SK-N-SH (cell line): ENCODE measurements at regions of chr2 and their contacts with region 1.

Region 1: GRCh38 chr2:175251425-175252041 is 70.0 kb upstream of the ATP5MC3 start:
- DNase-seq: peak; percentile 40
- H3K4me3 ChIP-seq: no peak overlapping the region; a peak in 1 of 4 replicates
- H3K27ac ChIP-seq: no peak overlapping the region
- H3K4me1 ChIP-seq: no peaks in the 10 kb centered on the region
- H3K27me3 ChIP-seq: no peaks in the 10 kb centered on the region
- CTCF ChIP-seq: peak; percentile 86
- EP300 ChIP-seq: no peak
- RAD21 ChIP-seq: peak; percentile 69

Region 2: DNA sequence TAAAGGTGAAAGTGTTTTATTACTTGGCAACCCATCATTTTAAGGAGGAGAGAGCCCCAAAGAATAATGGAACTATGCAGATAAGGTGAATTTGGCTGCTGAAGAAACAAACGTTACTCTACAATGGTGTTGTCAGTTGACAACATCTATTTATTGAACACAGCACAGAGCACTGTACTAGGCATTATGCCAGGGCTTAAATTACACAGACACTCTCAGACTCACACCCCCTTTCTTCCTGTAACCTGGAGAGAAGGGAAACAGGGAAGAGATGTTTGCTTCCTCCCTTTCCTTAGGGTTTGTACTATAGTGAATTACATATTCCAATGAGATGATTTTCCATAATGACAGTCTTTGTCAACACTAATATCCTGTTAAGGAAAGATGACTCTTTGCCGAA is 24.0 kb after region 1 on chr2:
- CTCF ChIA-PET with region 1: interaction called, 168 read pairs
- POLR2A ChIA-PET with region 1: no interaction called
- DNase-seq: peak; percentile 37
- H3K4me3 ChIP-seq: no peak overlapping the region
- H3K27ac ChIP-seq: no peak overlapping the region
- H3K4me1 ChIP-seq: peaks cover 0 to 7% of the 10 kb centered on the region in 2 experiments; a peak in 1 of 4 replicates
- H3K27me3 ChIP-seq: no peaks in the 10 kb centered on the region; the same call in 1 of the 2 replicates
- CTCF ChIP-seq: no peak
- EP300 ChIP-seq: peak in 1 of 2 experiments; percentile 18; a peak in 1 of 4 replicates
- RAD21 ChIP-seq: no peak

Region 3: GRCh38 chr2:175304541-175304940 is 53.0 kb after region 1 on chr2:
- CTCF ChIA-PET with region 1: interaction called, 13 read pairs
- POLR2A ChIA-PET with region 1: no interaction called
- DNase-seq: no peak
- H3K4me3 ChIP-seq: no peak overlapping the region
- H3K27ac ChIP-seq: no peak overlapping the region
- H3K4me1 ChIP-seq: no peaks in the 10 kb centered on the region
- H3K27me3 ChIP-seq: no peaks in the 10 kb centered on the region; the same call in 1 of the 2 replicates
- CTCF ChIP-seq: no peak
- EP300 ChIP-seq: no peak
- RAD21 ChIP-seq: no peak

Region 4: DNA sequence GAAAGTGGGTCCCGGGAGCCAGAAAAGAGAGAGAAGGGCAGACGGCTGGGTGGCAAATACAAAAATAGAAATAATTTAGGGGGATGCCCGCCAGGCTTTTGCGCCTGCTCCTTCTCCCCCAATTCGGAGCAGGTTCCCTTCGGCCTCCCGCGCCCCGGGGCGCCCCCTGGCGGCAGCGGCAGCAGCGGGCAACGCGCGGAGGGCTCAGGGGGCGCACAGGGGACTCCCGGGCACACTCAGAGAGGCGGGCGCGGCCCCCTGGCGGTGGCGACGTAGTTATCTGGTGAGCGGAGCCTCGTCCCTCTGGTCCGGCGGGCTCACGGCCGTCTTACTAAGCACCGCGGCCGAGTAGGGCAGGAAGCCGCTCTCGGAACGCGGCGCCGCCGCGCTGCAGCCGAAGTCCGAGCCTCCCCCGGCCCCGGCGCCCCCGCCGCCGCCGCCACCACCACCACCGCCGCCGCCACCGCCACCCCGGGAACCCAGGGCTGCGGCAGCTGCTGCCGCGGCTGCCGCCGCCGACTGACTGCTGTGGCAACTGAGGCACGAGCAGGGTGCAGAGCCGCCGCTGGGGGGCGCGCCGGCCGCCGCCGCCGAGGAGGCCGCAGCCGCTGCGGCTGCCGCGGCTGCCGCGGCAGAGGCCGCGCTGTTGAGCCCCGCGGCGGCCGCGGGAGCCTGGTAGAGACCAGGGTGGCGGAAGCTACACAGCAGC is 828.5 kb after region 1 on chr2:
- CTCF ChIA-PET with region 1: interaction called, 65 read pairs
- POLR2A ChIA-PET with region 1: no interaction called
- DNase-seq: peak; percentile 95
- H3K4me3 ChIP-seq: peak overlapping the region; percentile 39 to 52
- H3K27ac ChIP-seq: no peak overlapping the region
- H3K4me1 ChIP-seq: peaks cover 0 to 23% of the 10 kb centered on the region in 2 experiments; a peak in 1 of 4 replicates
- H3K27me3 ChIP-seq: peaks cover 70% of the 10 kb centered on the region
- CTCF ChIP-seq: peak; percentile 87
- EP300 ChIP-seq: no peak
- RAD21 ChIP-seq: peak; percentile 63